ENCODE measurements at regions of chrX and their contacts with region 1.

Region 1: GRCh38 chrX:132592880-132593279 is 104.0 kb upstream of the MBNL3 start:
- DNase-seq: no peak
- H3K4me3 ChIP-seq: no peak overlapping the region
- H3K27ac ChIP-seq: no peak overlapping the region
- H3K4me1 ChIP-seq: no peaks in the 10 kb centered on the region
- H3K27me3 ChIP-seq: no peaks in the 10 kb centered on the region
- CTCF ChIP-seq: peak; percentile 7 to 58

Region 2: GRCh38 chrX:132292793-132293192 is 300.1 kb before region 1 on chrX:
- CTCF ChIA-PET with region 1: interaction called, 3 read pairs
- dilution Hi-C with region 1: no loop called
- in situ Hi-C with region 1: loop called (anchors 10 kb)
- intact Hi-C with region 1: loop called (anchors 2 kb)
- DNase-seq: peak; percentile 49
- H3K4me3 ChIP-seq: no peak overlapping the region
- H3K27ac ChIP-seq: no peak overlapping the region
- H3K4me1 ChIP-seq: no peaks in the 10 kb centered on the region
- H3K27me3 ChIP-seq: no peaks in the 10 kb centered on the region
- CTCF ChIP-seq: peak; percentile 52 to 75

Region 3: DNA sequence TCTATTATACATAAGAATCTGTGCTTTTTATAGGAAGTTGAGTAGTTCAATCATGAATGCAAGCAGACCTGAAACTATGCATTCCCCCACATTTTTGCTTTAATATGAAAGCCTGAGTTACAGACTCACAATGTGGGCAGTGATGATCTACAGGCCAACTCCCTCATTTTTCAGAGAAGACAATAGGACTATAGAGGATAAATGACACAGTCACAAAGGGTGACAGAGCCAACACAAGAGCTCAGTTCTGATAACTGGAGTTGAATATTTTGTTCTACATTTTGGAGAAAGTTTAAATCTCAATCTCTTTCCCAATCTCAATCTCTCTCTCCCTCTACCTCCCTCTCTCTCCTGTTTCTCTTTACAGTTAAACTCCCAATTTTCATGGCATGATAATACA is 131.0 kb before region 1 on chrX:
- CTCF ChIA-PET with region 1: interaction called, 15 read pairs
- dilution Hi-C with region 1: no loop called
- in situ Hi-C with region 1: no loop called
- intact Hi-C with region 1: no loop called
- DNase-seq: no peak
- H3K4me3 ChIP-seq: no peak overlapping the region
- H3K27ac ChIP-seq: no peak overlapping the region
- H3K4me1 ChIP-seq: no peaks in the 10 kb centered on the region
- H3K27me3 ChIP-seq: peaks cover 1% of the 10 kb centered on the region
- CTCF ChIP-seq: no peak

Region 4: GRCh38 chrX:132532955-132533354 is 59.9 kb before region 1 on chrX:
- CTCF ChIA-PET with region 1: no interaction called
- dilution Hi-C with region 1: no loop called
- in situ Hi-C with region 1: no loop called
- intact Hi-C with region 1: no loop called
- DNase-seq: peak; percentile 1
- H3K4me3 ChIP-seq: no peak overlapping the region
- H3K27ac ChIP-seq: no peak overlapping the region
- H3K4me1 ChIP-seq: no peaks in the 10 kb centered on the region
- H3K27me3 ChIP-seq: no peaks in the 10 kb centered on the region
- CTCF ChIP-seq: no peak

Region 5: DNA sequence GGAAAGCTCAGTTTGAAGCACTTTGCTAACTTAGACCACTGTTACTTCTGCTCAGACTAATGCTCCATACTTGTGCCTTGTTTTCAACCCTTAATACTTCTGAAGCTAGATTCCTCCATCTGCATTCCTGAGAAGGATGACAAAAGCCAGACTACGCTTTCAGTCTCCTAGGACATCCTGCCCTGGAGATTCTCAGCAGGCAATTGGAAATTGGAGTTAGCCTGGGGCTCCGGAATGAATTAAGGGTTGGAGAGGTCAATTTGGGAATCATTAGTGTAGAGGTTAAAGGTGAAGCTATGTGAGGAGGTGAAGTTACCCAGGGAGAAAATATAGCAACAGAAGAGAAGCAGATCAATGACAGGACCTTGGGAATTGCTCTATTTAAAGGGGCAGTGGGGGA is 111.9 kb after region 1 on chrX:
- CTCF ChIA-PET with region 1: no interaction called
- dilution Hi-C with region 1: no loop called
- in situ Hi-C with region 1: no loop called
- intact Hi-C with region 1: no loop called
- DNase-seq: no peak
- H3K4me3 ChIP-seq: no peak overlapping the region
- H3K27ac ChIP-seq: no peak overlapping the region
- H3K4me1 ChIP-seq: no peaks in the 10 kb centered on the region
- H3K27me3 ChIP-seq: peaks cover 2% of the 10 kb centered on the region
- CTCF ChIP-seq: no peak